ENCODE measurements at regions of chr9 and their contacts with region 1.

Region 1: DNA sequence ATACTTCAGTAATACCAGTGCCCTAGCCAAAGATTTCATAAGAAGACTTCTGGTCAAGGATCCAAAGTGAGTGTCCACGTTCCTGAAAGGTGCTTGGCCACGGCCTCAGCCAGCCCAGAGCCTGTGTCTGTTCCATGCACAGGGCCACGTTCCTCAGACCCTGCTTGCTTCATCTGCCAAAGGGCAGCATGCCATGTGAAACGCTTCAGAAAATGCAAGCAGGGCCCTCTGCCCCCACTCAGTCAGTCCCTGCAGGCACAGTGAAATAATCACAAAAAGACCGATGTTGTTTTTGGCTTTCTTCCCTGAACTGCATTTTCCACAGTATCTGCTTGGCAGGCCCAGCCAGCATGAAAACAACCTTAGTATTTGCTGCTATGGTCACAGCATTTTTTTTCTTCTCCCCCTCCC is 85.5 kb upstream of the CTSL start:
- DNase-seq: peak; percentile 58
- ATAC-seq: peak; percentile 69 to 88

Region 2: DNA sequence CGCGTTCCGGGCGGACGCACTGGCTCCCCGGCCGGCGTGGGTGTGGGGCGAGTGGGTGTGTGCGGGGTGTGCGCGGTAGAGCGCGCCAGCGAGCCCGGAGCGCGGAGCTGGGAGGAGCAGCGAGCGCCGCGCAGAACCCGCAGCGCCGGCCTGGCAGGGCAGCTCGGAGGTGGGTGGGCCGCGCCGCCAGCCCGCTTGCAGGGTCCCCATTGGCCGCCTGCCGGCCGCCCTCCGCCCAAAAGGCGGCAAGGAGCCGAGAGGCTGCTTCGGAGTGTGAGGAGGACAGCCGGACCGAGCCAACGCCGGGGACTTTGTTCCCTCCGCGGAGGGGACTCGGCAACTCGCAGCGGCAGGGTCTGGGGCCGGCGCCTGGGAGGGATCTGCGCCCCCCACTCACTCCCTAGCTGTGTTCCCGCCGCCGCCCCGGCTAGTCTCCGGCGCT is 142.8 kb before region 1 on chr9 and contains the start of gene DAPK1:
- intact Hi-C with region 1: loop called in 1 of 2 experiments (anchors 5 kb)
- DNase-seq: peak; percentile 67
- ATAC-seq: peak; percentile 86 to 93
- total RNA-seq, gene DAPK1: 19.9 to 21.7 TPM

Measured in left cardiac atrium (tissue), 4 donors.